ENCODE measurements at regions of chr5 and their contacts with region 1.

Region 1: GRCh38 chr5:132386644-132387286 is 17.3 kb downstream of the SLC22A5 start:
- DNase-seq: peak; percentile 56 to 89 (median 72)
- ATAC-seq: peak; percentile 86 to 89 (median 88)
- H3K4me3 ChIP-seq: no peak overlapping the region
- H3K4me3 Mint-ChIP-seq: no peak overlapping the region
- H3K27ac ChIP-seq: no peak overlapping the region
- H3K27ac Mint-ChIP-seq: peak overlapping the region; percentile 60 to 78
- H3K4me1 ChIP-seq: peaks cover 2 to 19% of the 10 kb centered on the region in 2 experiments
- H3K4me1 Mint-ChIP-seq: peaks cover 32 to 57% (median 32%) of the 10 kb centered on the region in 3 donors
- H3K27me3 ChIP-seq: no peaks in the 10 kb centered on the region
- H3K27me3 Mint-ChIP-seq: no peaks in the 10 kb centered on the region

Region 2: GRCh38 chr5:132473019-132473531 is 86.3 kb after region 1 on chr5:
- CTCF ChIA-PET with region 1: interaction called in 1 of 2 experiments, 10 read pairs
- POLR2A ChIA-PET with region 1: interaction called in 1 of 2 experiments, 4 read pairs
- DNase-seq: peak; percentile 55 to 94 (median 89)
- ATAC-seq: peak; percentile 68 to 91 (median 86)
- H3K4me3 ChIP-seq: no peak overlapping the region
- H3K4me3 Mint-ChIP-seq: peak overlapping the region; percentile 41 to 46 (median 43)
- H3K27ac ChIP-seq: peak overlapping the region; percentile 85
- H3K27ac Mint-ChIP-seq: peak overlapping the region; percentile 93 to 97
- H3K4me1 ChIP-seq: peaks cover 28 to 98% of the 10 kb centered on the region in 2 experiments
- H3K4me1 Mint-ChIP-seq: peaks cover 85 to 93% (median 90%) of the 10 kb centered on the region in 3 donors
- H3K27me3 ChIP-seq: no peaks in the 10 kb centered on the region
- H3K27me3 Mint-ChIP-seq: no peaks in the 10 kb centered on the region

Region 3: DNA sequence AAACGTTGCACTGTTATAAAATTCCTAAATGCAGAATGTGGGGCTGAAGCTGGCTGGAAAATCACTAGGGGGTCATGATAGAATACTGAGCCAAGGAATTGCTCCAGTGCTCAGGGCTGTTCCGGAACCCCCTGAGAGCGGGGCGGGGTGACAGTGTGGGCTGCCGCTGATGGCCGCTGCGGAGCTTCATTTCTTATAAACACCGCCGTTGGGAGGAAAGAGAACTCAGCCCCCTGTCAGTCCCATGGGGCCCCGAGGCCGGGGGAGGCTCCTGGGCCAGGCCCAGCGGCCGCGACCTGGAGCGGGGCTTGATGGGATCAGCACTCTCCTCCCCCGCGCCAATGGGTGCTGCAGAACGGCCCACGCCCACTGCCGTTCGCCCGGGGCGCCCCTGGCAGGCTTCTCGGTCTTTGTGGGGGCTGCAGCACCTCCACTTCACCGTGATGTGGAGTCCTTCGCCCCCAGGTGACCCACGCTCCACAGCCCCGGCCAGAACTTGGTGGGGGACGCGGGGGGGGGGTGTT is 109.0 kb after region 1 on chr5:
- CTCF ChIA-PET with region 1: interaction called, 63 to 72 read pairs
- POLR2A ChIA-PET with region 1: interaction called, 5 to 6 read pairs
- DNase-seq: peak in 33 of 35 experiments; percentile 47 to 78 (median 61)
- ATAC-seq: peak; percentile 35 to 46 (median 38)
- H3K4me3 ChIP-seq: peak overlapping the region; percentile 61 to 93
- H3K4me3 Mint-ChIP-seq: peak overlapping the region; percentile 92 to 96 (median 93)
- H3K27ac ChIP-seq: peak overlapping the region; percentile 92
- H3K27ac Mint-ChIP-seq: peak overlapping the region; percentile 96 to 99
- H3K4me1 ChIP-seq: peaks cover 26 to 80% of the 10 kb centered on the region in 2 experiments
- H3K4me1 Mint-ChIP-seq: peaks cover 69 to 76% (median 74%) of the 10 kb centered on the region in 3 donors
- H3K27me3 ChIP-seq: no peaks in the 10 kb centered on the region
- H3K27me3 Mint-ChIP-seq: no peaks in the 10 kb centered on the region

Region 4: GRCh38 chr5:132500931-132501630 is 114.3 kb after region 1 on chr5:
- CTCF ChIA-PET with region 1: interaction called, 63 to 72 read pairs
- POLR2A ChIA-PET with region 1: interaction called, 3 to 6 read pairs
- DNase-seq: peak in 34 of 35 experiments; percentile 51 to 91 (median 70)
- ATAC-seq: peak; percentile 23 to 45 (median 30)
- H3K4me3 ChIP-seq: no peak overlapping the region
- H3K4me3 Mint-ChIP-seq: no peak overlapping the region
- H3K27ac ChIP-seq: peak overlapping the region; percentile 92
- H3K27ac Mint-ChIP-seq: peak overlapping the region; percentile 77 to 99
- H3K4me1 ChIP-seq: peaks cover 0 to 47% of the 10 kb centered on the region in 2 experiments
- H3K4me1 Mint-ChIP-seq: peaks cover 30 to 39% (median 37%) of the 10 kb centered on the region in 3 donors
- H3K27me3 ChIP-seq: no peaks in the 10 kb centered on the region
- H3K27me3 Mint-ChIP-seq: peaks cover 0 to 3% of the 10 kb centered on the region in 2 donors

Region 5: GRCh38 chr5:132526290-132526973 is 139.7 kb after region 1 on chr5:
- CTCF ChIA-PET with region 1: interaction called, 3 to 10 read pairs
- POLR2A ChIA-PET with region 1: no interaction called
- DNase-seq: peak in 18 of 35 experiments; percentile 5 to 70 (median 16)
- ATAC-seq: peak in 3 of 4 experiments; percentile 60 to 68 (median 68)
- H3K4me3 ChIP-seq: no peak overlapping the region
- H3K4me3 Mint-ChIP-seq: no peak overlapping the region
- H3K27ac ChIP-seq: no peak overlapping the region
- H3K27ac Mint-ChIP-seq: no peak overlapping the region
- H3K4me1 ChIP-seq: peaks cover 2 to 10% of the 10 kb centered on the region in 2 experiments
- H3K4me1 Mint-ChIP-seq: peaks cover 8 to 24% (median 17%) of the 10 kb centered on the region in 3 donors
- H3K27me3 ChIP-seq: no peaks in the 10 kb centered on the region
- H3K27me3 Mint-ChIP-seq: peaks cover 0 to under 1% of the 10 kb centered on the region in 2 donors

Region 6: DNA sequence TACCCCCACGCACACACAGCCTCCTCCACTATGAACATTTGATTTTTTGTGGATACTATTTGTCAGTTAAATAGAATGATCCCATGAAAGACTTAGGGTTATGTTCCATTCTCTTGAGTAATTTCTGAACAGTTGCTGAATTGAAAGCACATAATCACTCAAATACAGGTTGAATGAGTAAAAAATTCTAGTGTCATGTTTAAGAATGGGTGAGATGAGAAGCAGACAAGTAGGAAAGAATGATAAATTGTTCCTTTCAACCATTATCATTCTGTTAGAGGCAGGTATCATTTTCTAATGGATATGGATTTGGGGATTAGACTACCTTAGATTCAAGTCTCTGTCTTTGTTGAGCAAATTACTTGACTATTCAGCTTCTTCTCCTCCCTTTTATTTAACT is 189.4 kb after region 1 on chr5:
- CTCF ChIA-PET with region 1: no interaction called
- POLR2A ChIA-PET with region 1: interaction called in 1 of 2 experiments, 13 read pairs
- DNase-seq: no peak
- ATAC-seq: no peak
- H3K4me3 ChIP-seq: no peak overlapping the region
- H3K4me3 Mint-ChIP-seq: no peak overlapping the region
- H3K27ac ChIP-seq: no peak overlapping the region
- H3K27ac Mint-ChIP-seq: no peak overlapping the region
- H3K4me1 ChIP-seq: no peaks in the 10 kb centered on the region
- H3K4me1 Mint-ChIP-seq: peaks cover 0 to 3% (median 0%) of the 10 kb centered on the region in 3 donors
- H3K27me3 ChIP-seq: no peaks in the 10 kb centered on the region
- H3K27me3 Mint-ChIP-seq: no peaks in the 10 kb centered on the region

Measured in T-cell (primary cell).